Activated CD4-positive, alpha-beta memory T cell treated with anti-CD3 and anti-CD28 coated beads for 36 hours (primary cell): ENCODE measurements at regions of chr6 and their contacts with region 1.

Region 1: GRCh38 chr6:161393839-161394364 is 120.0 kb upstream of the AGPAT4 start:
- DNase-seq: peak; percentile 67
- H3K4me3 Mint-ChIP-seq: no peak overlapping the region
- H3K27ac Mint-ChIP-seq: no peak overlapping the region
- H3K4me1 Mint-ChIP-seq: no peaks in the 10 kb centered on the region
- H3K27me3 Mint-ChIP-seq: no peaks in the 10 kb centered on the region

Region 2: DNA sequence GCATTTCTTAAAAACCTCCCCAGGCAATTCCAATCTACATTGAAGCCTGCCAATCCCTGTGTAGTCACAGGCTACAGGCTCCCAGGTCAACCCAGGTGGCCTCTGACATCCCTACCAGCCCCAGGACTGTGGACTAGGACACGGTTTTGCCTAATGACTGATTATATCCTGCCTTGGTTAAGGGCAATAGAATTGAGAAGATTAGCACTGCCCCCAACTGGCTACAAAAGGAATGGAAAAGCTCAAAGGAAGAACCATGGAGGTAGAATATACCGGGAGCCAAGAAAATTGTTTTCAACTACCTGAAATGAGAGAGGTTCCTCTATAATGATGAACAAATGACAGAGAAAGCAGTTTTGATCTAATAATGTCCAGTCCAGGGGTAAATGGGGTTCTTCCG is 301.1 kb after region 1 on chr6:
- CTCF ChIA-PET with region 1: interaction called, 4 read pairs
- POLR2A ChIA-PET with region 1: no interaction called
- intact Hi-C with region 1: loop called (anchors 1 kb)
- DNase-seq: no peak
- H3K4me3 Mint-ChIP-seq: no peak overlapping the region
- H3K27ac Mint-ChIP-seq: no peak overlapping the region
- H3K4me1 Mint-ChIP-seq: no peaks in the 10 kb centered on the region
- H3K27me3 Mint-ChIP-seq: no peaks in the 10 kb centered on the region

Region 3: GRCh38 chr6:162727309-162728182 is 1333.6 kb after region 1 on chr6 and contains the starts of genes PACRG and PRKN:
- CTCF ChIA-PET with region 1: no interaction called
- POLR2A ChIA-PET with region 1: no interaction called
- intact Hi-C with region 1: loop called (anchors 5 kb)
- DNase-seq: peak; percentile 98
- H3K4me3 Mint-ChIP-seq: peak within 1 kb of the TSS; percentile 83
- H3K27ac Mint-ChIP-seq: peak within 1 kb of the TSS; percentile 57
- H3K4me1 Mint-ChIP-seq: peaks cover 9% of the 10 kb centered on the region
- H3K27me3 Mint-ChIP-seq: peaks cover 2% of the 10 kb centered on the region
- total RNA-seq, gene PACRG: not detected
- total RNA-seq, gene PRKN: 0.82 to 1.00 TPM